ENCODE measurements at regions of chr15 and their contacts with region 1.

Region 1: GRCh38 chr15:57654153-57654852 is 52.2 kb upstream of the POLR2M start:
- DNase-seq: peak; percentile 72
- H3K4me3 ChIP-seq: no peak overlapping the region
- H3K27me3 ChIP-seq: no peaks in the 10 kb centered on the region
- CTCF ChIP-seq: no peak

Region 2: DNA sequence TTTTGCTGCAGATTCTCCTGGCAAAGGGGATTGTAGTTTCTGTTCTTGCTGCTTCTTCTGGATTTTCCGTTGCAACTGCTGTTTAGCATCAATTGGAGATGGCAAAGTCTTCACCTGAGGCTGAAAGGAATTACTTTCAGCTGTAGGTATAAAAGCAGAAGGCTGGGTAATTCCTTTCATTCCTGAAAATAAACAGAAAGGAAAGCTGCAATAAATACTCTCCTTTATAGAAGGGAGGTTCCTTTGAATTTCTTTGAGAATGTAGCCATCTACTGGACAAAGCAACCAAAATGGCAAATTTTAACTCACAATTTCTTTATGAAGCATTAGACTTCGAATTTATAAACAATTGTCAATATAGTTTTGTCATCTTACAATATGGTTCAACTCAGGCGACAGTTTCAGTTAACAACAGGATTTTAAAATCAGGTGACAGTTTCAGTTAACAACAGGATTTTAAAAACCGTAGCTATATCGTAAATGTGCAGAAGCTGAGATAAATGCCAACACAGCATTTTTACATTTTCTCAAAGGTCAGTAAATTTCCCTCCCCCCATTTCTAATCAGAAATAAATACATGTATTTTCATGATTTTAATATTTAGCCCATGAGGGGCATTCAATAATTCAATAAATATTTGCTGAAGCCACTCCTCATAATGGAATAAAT is 1556.0 kb before region 1 on chr15:
- CTCF ChIA-PET with region 1: no interaction called
- POLR2A ChIA-PET with region 1: interaction called, 24 read pairs
- DNase-seq: no peak
- H3K4me3 ChIP-seq: no peak overlapping the region
- H3K27me3 ChIP-seq: no peaks in the 10 kb centered on the region
- CTCF ChIP-seq: peak; percentile 10; the same call in 1 of the 2 replicates

Region 3: GRCh38 chr15:57635300-57635909 is 18.9 kb before region 1 on chr15:
- CTCF ChIA-PET with region 1: no interaction called
- POLR2A ChIA-PET with region 1: no interaction called
- DNase-seq: no peak
- H3K4me3 ChIP-seq: no peak overlapping the region
- H3K27me3 ChIP-seq: no peaks in the 10 kb centered on the region
- CTCF ChIP-seq: 0 out of 2 replicates have a peak, but pooled peaks have one; percentile 15